Left ventricle myocardium inferior (tissue), 1 donor: ENCODE measurements at regions of chr5 and their contacts with region 1.

Region 1: DNA sequence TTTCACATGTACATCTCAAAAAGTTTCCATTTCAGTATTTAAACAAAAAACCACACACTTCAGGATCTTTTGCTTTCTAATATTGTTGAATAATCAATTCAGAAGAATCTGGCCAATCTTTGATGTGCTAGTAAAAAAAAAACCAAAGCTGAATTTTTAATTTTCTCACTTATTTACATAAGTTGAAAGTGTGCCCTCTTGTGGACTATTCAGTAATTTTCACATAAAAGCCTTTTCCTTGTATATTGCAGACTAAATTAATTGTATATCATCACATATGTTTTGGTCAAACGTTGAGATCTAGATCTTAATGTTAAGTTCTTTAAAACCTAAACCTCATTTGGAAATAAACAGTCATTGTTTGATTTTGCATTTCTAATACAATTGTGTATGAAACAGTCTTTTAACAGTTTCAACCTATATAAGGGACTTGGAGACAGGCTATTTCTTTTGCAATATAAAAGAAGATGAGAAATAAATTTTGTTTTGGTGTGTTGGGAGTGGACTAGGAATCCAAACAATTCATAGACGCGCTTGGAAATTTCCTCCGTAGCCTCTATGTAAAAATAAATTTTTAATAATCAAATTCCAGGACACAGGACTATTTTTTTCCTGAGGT is 68.1 kb downstream of the NIPBL start:
- DNase-seq: no peak
- H3K4me3 ChIP-seq: no peak overlapping the region
- H3K27ac ChIP-seq: no peak overlapping the region
- H3K4me1 ChIP-seq: peaks cover 81% of the 10 kb centered on the region
- H3K27me3 ChIP-seq: no peaks in the 10 kb centered on the region
- CTCF ChIP-seq: peak; percentile 71

Region 2: DNA sequence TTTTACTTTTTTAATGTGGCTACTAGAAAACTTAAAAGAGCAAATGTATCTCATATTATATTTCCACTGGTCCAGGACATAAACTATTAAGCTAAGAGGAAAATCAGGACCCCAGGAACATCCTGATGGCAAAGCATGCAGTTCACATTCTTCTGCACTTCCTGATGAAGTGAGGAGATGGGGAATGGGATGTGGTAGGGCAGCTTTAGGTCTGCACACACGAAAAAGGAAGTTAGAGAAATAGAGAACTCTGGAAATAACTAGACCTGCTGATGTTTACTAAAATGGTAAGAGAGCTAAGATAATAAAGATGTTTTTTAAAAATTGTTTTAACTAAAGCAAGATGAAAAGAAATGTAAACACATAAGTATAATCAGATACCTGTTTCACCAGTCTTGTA is 107.9 kb before region 1 on chr5:
- intact Hi-C with region 1: no loop called
- DNase-seq: no peak
- H3K4me3 ChIP-seq: no peak overlapping the region
- H3K27ac ChIP-seq: no peak overlapping the region
- H3K4me1 ChIP-seq: no peaks in the 10 kb centered on the region
- H3K27me3 ChIP-seq: no peaks in the 10 kb centered on the region
- CTCF ChIP-seq: no peak

Region 3: DNA sequence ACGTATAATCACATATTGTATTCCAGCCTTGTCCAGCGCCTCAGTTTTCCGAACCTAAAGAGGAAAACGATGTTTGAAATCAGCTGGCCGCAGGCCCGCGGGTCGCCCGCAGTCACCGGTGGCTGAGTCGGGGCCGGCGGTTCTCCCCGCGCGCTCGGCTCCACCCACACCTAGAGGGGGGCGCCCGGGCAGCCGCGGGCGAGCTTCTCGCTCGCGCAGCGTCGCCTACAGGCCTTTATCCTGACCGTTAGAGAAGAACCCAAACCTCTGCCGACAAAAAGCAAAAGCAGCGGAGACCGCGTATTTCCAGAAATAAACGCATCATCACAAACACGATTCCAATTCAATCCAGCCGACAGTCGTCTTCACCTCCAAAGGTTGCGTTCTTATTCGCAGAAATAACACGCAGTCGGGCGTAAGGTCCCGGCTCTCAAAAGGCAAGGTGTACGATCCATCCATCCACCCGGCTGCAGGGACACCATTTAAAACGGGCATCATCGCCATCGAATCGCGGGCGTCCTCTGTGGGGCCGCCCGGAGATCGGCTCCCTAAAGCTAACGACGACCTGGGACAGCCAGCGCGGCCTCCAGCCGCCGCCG is 68.8 kb before region 1 on chr5:
- intact Hi-C with region 1: loop called (anchors 5 kb)
- DNase-seq: peak; percentile 84
- H3K4me3 ChIP-seq: peak overlapping the region; percentile 91
- H3K27ac ChIP-seq: peak overlapping the region; percentile 97
- H3K4me1 ChIP-seq: peaks cover 77% of the 10 kb centered on the region
- H3K27me3 ChIP-seq: no peaks in the 10 kb centered on the region
- CTCF ChIP-seq: peak; percentile 67